ENCODE measurements at regions of chr13 and their contacts with region 1.

Region 1: GRCh38 chr13:33487575-33488243 is 202.2 kb upstream of the STARD13 start:
- H3K4me3 Mint-ChIP-seq: no peak overlapping the region
- H3K27ac Mint-ChIP-seq: no peak overlapping the region
- H3K4me1 Mint-ChIP-seq: peaks cover 9% of the 10 kb centered on the region
- H3K27me3 Mint-ChIP-seq: no peaks in the 10 kb centered on the region

Region 2: GRCh38 chr13:33228648-33229445 is 258.9 kb before region 1 on chr13:
- intact Hi-C with region 1: loop called (anchors 1 kb)
- H3K4me3 Mint-ChIP-seq: no peak overlapping the region
- H3K27ac Mint-ChIP-seq: no peak overlapping the region
- H3K4me1 Mint-ChIP-seq: peaks cover 13% of the 10 kb centered on the region
- H3K27me3 Mint-ChIP-seq: no peaks in the 10 kb centered on the region

Region 3: DNA sequence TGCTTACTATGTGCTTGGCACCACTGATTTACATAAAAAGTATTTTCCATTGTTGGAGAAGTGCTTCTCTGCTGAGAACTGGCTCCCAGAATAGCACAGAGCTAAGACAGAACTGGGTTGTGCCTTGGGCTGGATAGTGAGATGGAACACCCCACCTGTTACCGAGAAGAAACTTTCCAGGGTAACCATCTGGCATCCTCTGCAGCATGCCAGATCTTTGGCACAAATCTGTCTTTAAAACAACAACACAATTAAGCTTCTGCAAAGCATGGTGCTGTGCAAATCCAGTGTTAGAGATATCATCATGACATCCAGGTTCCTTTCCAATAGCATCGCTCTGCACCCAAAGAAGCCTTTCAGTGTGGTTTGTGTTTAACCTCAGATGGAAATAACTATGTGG is 127.7 kb after region 1 on chr13:
- intact Hi-C with region 1: no loop called
- H3K4me3 Mint-ChIP-seq: no peak overlapping the region
- H3K27ac Mint-ChIP-seq: no peak overlapping the region
- H3K4me1 Mint-ChIP-seq: no peaks in the 10 kb centered on the region
- H3K27me3 Mint-ChIP-seq: peaks cover 3% of the 10 kb centered on the region